ENCODE measurements at regions of chr13 and their contacts with region 1.

Region 1: GRCh38 chr13:74289861-74290773 is 155.9 kb upstream of the KLF12 start:
- DNase-seq: no peak
- H3K4me3 ChIP-seq: peak overlapping the region; percentile 6 to 31
- H3K27ac ChIP-seq: no peak overlapping the region
- H3K4me1 ChIP-seq: peaks cover 0 to 32% (median 19%) of the 10 kb centered on the region in 4 donors
- H3K27me3 ChIP-seq: no peaks in the 10 kb centered on the region
- CTCF ChIP-seq: peak in 1 of 2 experiments; percentile 8

Region 2: DNA sequence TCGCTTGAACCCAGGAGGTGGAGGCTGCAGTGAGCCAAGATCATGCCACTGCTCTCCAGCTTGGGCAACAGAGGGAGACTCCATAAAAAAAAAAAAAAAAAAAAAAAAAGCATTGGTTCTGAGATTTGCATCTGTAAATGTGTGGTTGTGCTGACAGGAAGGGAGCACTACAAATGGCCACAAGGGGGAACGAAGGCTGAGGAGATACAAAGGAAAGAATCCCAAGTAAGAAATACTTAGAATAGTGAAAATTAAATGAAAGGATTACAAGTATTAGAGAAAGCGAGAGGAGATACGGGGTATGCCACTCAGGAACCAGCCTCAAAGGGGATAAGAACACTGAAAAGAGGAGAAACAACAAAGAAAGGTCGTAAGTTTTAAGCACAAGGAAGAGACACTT is 440.8 kb before region 1 on chr13:
- intact Hi-C with region 1: loop called (anchors 10 kb)
- DNase-seq: no peak
- H3K4me3 ChIP-seq: no peak overlapping the region
- H3K27ac ChIP-seq: no peak overlapping the region
- H3K4me1 ChIP-seq: peaks cover 0 to 13% (median 3%) of the 10 kb centered on the region in 4 donors
- H3K27me3 ChIP-seq: no peaks in the 10 kb centered on the region
- CTCF ChIP-seq: peak in 1 of 2 experiments; percentile 25

Region 3: DNA sequence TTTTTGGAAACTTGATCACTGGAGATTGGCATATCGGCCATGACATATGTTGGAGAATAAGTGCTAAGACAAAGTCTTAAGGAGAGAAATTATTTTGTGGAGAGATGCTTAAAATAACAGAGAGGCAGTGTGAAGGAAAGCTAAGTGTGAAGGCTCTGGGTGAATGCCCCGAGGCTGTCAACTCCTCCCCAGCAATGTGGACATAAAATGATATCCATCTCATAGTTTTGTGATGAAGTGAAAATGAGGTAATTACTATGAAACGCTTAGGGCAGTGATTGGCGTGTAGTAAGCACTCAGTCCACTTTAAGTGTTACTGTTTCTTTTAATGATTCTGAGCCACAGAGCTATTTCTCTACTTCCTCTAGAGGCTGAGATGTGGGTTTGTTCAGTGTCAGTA is 39.8 kb after region 1 on chr13:
- intact Hi-C with region 1: no loop called
- DNase-seq: no peak
- H3K4me3 ChIP-seq: no peak overlapping the region
- H3K27ac ChIP-seq: no peak overlapping the region
- H3K4me1 ChIP-seq: peaks cover 0 to 5% (median 0%) of the 10 kb centered on the region in 4 donors
- H3K27me3 ChIP-seq: no peaks in the 10 kb centered on the region
- CTCF ChIP-seq: no peak

Measured in tibial artery (tissue), 4 donors.